Esophagus muscularis mucosa (tissue), 4 donors: ENCODE measurements at regions of chr1 and their contacts with region 1.

Region 1: DNA sequence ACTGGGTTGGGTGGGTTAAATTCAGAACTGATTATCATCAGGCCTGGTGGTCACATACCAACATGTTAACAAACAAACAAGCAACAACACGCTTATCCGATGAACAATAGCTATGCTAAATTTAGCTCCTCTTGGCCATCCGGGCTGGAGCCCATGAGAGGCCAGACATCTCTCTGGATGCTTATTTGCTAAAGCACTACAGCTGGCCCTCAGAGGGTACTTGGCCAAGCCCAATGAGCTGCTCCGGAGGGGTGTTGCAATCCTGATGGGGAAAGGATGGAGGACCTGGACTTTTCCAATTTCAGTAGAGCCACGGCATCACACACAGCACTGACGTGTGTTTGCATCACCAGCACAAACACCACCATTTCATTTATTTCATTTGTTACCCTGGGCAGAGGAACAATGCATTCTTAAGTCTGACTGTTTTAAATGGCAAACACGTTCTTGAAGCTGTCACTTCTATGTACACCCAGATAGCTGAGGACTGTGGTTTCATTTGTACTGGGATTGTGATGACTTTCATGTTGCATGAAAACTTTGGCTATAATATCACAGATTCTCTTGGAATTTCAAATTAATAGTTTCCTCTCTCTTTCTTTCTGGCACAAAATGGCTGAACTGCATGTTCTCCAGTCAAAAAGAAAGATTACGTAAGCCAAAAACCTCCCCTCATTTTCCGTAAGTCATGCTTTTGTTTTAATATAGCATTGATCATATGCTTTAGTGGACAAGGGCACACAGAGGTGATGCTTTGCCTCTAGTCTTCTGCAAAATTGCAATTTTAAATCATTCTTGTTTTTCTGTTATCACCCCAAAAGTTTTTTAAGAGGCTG is 359.8 kb upstream of the KAZN start:
- DNase-seq: peak; percentile 95
- H3K4me3 ChIP-seq: no peak overlapping the region
- H3K27ac ChIP-seq: peak overlapping the region in 3 of 4 donors; percentile 11 to 51 (median 30)
- H3K4me1 ChIP-seq: no peaks in the 10 kb centered on the region
- H3K27me3 ChIP-seq: no peaks in the 10 kb centered on the region
- CTCF ChIP-seq: no peak
- EP300 ChIP-seq: no peak
- POLR2A ChIP-seq: no peak

Region 2: GRCh38 chr1:14037101-14037847 is 201.4 kb before region 1 on chr1:
- intact Hi-C with region 1: no loop called
- DNase-seq: no peak
- H3K4me3 ChIP-seq: no peak overlapping the region
- H3K27ac ChIP-seq: no peak overlapping the region
- H3K4me1 ChIP-seq: no peaks in the 10 kb centered on the region
- H3K27me3 ChIP-seq: no peaks in the 10 kb centered on the region
- CTCF ChIP-seq: no peak
- EP300 ChIP-seq: no peak
- POLR2A ChIP-seq: no peak

Region 3: GRCh38 chr1:14108356-14109275 is 130.1 kb before region 1 on chr1:
- intact Hi-C with region 1: loop called (anchors 10 kb)
- DNase-seq: peak; percentile 91
- H3K4me3 ChIP-seq: no peak overlapping the region
- H3K27ac ChIP-seq: peak overlapping the region in 3 of 4 donors; percentile 34 to 57 (median 52)
- H3K4me1 ChIP-seq: peaks cover 0 to 21% (median 20%) of the 10 kb centered on the region in 4 donors
- H3K27me3 ChIP-seq: peaks cover 0 to 6% (median 0%) of the 10 kb centered on the region in 4 donors
- CTCF ChIP-seq: no peak
- EP300 ChIP-seq: no peak
- POLR2A ChIP-seq: no peak